HCT116 (cell line): ENCODE measurements at regions of chr9 and their contacts with region 1.

Region 1: DNA sequence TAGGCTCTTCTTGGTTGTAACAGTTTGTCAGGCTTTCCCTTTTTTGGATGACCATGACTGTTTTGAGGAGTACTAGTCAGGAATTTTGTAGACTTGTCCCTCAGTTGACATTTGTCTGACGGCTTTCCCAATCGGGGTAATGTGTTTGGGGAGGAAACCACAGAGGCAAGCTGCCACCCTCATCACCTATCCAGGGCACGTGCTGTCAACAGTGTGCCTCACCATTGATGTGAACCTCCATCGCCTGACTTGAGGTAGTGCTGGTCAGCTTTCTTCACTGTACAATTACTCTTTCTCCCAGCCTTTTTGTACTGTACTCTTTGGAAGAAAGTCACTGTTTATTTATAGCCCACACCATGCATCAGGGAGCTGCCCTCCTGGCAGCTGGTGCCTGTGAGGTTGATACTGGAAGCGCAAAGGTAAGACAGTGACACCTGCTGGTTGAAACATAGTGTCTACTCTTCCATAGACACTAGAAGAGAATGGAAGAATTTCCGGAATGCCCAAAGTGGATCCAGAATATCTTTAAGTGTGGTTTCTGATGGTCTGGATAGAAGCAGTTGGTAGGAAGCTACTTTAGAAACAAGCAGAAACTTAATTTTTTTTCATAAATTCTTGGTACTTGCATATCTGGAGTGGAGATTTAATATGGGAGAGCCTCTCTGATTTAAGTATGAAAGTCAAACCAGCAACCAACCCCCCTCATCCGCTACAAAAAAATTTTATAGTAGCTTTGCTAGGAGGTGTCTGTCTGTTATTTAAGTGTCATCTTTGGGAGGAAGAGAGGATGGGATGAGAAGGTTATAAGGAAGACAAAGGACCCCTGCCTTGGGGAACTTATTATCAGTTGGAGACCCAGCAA is 69.3 kb downstream of the SNX30 start:
- DNase-seq: peak; percentile 36
- ATAC-seq: peak; percentile 99
- H3K4me3 ChIP-seq: no peak overlapping the region
- H3K27ac ChIP-seq: no peak overlapping the region
- H3K4me1 ChIP-seq: no peaks in the 10 kb centered on the region
- H3K27me3 ChIP-seq: no peaks in the 10 kb centered on the region
- CTCF ChIP-seq: peak; percentile 52 to 86 (median 74); a peak in 5 of 6 replicates
- POLR2A ChIP-seq: no peak
- RAD21 ChIP-seq: peak; percentile 79

Region 2: GRCh38 chr9:112086627-112087026 is 733.2 kb before region 1 on chr9:
- CTCF ChIA-PET with region 1: no interaction called
- POLR2A ChIA-PET with region 1: no interaction called
- RAD21 ChIA-PET with region 1: no interaction called
- intact Hi-C with region 1: loop called (anchors 1 kb)
- DNase-seq: no peak
- ATAC-seq: peak; percentile 38; the same call in 1 of the 2 replicates
- H3K4me3 ChIP-seq: no peak overlapping the region
- H3K27ac ChIP-seq: no peak overlapping the region
- H3K4me1 ChIP-seq: no peaks in the 10 kb centered on the region
- H3K27me3 ChIP-seq: no peaks in the 10 kb centered on the region
- CTCF ChIP-seq: peak; percentile 47 to 61 (median 53); a peak in 5 of 6 replicates
- POLR2A ChIP-seq: no peak
- RAD21 ChIP-seq: peak; percentile 70

Region 3: DNA sequence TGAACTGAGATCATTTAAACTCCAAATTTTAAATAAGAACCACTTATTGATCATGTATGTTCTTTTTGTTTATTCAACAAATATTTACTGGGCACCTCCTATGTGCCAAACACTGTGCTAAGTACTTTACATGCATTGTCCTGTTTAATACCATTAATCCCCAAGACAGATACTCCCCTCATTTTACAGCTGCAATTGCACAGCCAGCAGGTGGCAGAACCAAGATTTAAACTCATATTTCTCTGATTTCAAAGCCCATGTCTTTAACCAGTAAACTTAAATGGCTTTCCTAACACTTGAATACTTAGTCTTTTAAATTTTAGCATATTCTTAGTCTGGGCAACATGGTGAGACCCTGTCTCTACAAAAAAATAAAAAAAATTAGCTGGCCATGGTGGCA is 376.7 kb before region 1 on chr9:
- CTCF ChIA-PET with region 1: interaction called, 5 read pairs
- POLR2A ChIA-PET with region 1: no interaction called
- RAD21 ChIA-PET with region 1: no interaction called
- intact Hi-C with region 1: loop called (anchors 2 kb)
- DNase-seq: no peak
- ATAC-seq: 0 out of 2 replicates have a peak, but pooled peaks have one; percentile 55
- H3K4me3 ChIP-seq: no peak overlapping the region
- H3K27ac ChIP-seq: no peak overlapping the region
- H3K4me1 ChIP-seq: no peaks in the 10 kb centered on the region
- H3K27me3 ChIP-seq: no peaks in the 10 kb centered on the region
- CTCF ChIP-seq: peak; percentile 43 to 67 (median 55); a peak in 5 of 6 replicates
- POLR2A ChIP-seq: no peak
- RAD21 ChIP-seq: peak; percentile 48

Region 4: GRCh38 chr9:112750111-112750767 is 69.6 kb before region 1 on chr9 and contains the start of gene SNX30:
- CTCF ChIA-PET with region 1: no interaction called
- POLR2A ChIA-PET with region 1: no interaction called
- RAD21 ChIA-PET with region 1: no interaction called
- intact Hi-C with region 1: no loop called
- DNase-seq: peak; percentile 62
- ATAC-seq: peak; percentile 83
- H3K4me3 ChIP-seq: peak within 1 kb of the TSS; percentile 72 to 88
- H3K27ac ChIP-seq: peak within 1 kb of the TSS; percentile 65
- H3K4me1 ChIP-seq: peaks cover 22 to 51% of the 10 kb centered on the region in 2 experiments
- H3K27me3 ChIP-seq: no peaks in the 10 kb centered on the region
- CTCF ChIP-seq: no peak
- POLR2A ChIP-seq: peak; percentile 98
- RAD21 ChIP-seq: 0 out of 2 replicates have a peak, but pooled peaks have one; percentile 12
- total RNA-seq, gene SNX30: 12.7 TPM